T-cell (primary cell): ENCODE measurements at regions of chr2 and their contacts with region 1.

Region 1: DNA sequence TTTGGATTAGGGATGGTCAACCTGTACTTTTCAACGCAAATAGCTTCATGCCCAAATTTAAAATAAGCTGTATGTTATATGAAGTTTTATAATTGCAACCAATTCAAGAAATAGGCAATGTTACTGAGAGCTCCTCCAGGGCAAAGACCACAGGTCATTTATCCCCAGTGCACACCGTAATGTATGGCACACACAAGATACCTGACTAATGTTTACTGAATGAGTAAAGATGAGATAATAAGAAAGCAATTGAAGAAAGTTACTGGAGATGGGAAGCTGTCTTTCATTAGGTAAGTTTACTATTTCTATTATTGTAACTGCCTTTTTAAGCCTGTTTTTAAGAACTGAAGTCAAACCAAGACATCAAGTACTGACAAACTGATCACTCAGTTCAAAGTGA is 184.5 kb upstream of the VRK2 start:
- DNase-seq: no peak
- ATAC-seq: no peak
- H3K4me3 ChIP-seq: no peak overlapping the region
- H3K4me3 Mint-ChIP-seq: no peak overlapping the region
- H3K27ac ChIP-seq: no peak overlapping the region
- H3K27ac Mint-ChIP-seq: no peak overlapping the region
- H3K4me1 ChIP-seq: no peaks in the 10 kb centered on the region
- H3K4me1 Mint-ChIP-seq: no peaks in the 10 kb centered on the region
- H3K27me3 ChIP-seq: no peaks in the 10 kb centered on the region
- H3K27me3 Mint-ChIP-seq: no peaks in the 10 kb centered on the region

Region 2: GRCh38 chr2:57880446-57880845 is 18.3 kb after region 1 on chr2:
- CTCF ChIA-PET with region 1: interaction called in 1 of 2 experiments, 11 read pairs
- POLR2A ChIA-PET with region 1: no interaction called
- DNase-seq: no peak
- ATAC-seq: no peak
- H3K4me3 ChIP-seq: no peak overlapping the region
- H3K4me3 Mint-ChIP-seq: no peak overlapping the region
- H3K27ac ChIP-seq: no peak overlapping the region
- H3K27ac Mint-ChIP-seq: no peak overlapping the region
- H3K4me1 ChIP-seq: no peaks in the 10 kb centered on the region
- H3K4me1 Mint-ChIP-seq: no peaks in the 10 kb centered on the region
- H3K27me3 ChIP-seq: no peaks in the 10 kb centered on the region
- H3K27me3 Mint-ChIP-seq: no peaks in the 10 kb centered on the region

Region 3: GRCh38 chr2:57906152-57906732 is 44.1 kb after region 1 on chr2:
- CTCF ChIA-PET with region 1: no interaction called
- POLR2A ChIA-PET with region 1: no interaction called
- DNase-seq: peak in 1 of 35 experiments; percentile 49
- ATAC-seq: peak in 1 of 4 experiments; percentile 48
- H3K4me3 ChIP-seq: no peak overlapping the region
- H3K4me3 Mint-ChIP-seq: no peak overlapping the region
- H3K27ac ChIP-seq: no peak overlapping the region
- H3K27ac Mint-ChIP-seq: no peak overlapping the region
- H3K4me1 ChIP-seq: no peaks in the 10 kb centered on the region
- H3K4me1 Mint-ChIP-seq: peaks cover 13 to 28% (median 23%) of the 10 kb centered on the region in 3 donors
- H3K27me3 ChIP-seq: no peaks in the 10 kb centered on the region
- H3K27me3 Mint-ChIP-seq: no peaks in the 10 kb centered on the region